Naive thymus-derived CD4-positive, alpha-beta T cell (primary cell): ENCODE measurements at regions of chr19 and their contacts with region 1.

Region 1: DNA sequence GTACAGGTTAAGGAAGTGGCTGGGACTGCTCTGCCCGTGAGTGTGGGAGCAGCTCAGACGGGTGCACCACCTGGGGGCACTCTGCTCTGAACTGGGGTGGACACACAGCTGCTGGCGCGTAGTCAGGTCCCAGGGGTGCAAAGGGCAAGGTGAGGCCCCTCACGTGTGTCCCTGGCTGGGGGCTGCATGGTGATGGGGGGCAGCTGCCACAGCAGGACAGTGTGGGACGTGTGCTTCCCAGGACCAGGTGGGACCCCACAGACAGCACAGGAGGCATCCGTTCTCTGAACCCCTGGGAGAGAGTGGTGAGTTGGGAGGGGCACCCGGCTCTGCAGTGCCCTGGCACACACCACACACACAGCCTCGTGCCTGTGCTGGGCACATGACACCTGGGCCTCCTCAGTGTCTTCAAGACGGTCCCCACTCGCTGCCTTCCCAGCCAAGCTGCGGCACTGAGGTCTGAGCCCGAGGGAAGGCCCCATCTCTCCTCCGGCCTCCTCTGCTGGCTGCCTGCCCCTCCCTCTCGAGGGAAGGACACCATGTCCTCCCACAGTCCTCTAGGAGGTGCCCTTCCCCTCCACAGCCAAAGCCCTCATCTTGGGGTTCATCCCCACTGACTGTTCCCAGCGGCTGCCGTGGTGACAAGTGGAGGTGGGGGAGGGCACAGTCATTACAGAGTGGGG is 24.7 kb downstream of the CILP2 start:
- DNase-seq: peak in 7 of 9 donors; percentile 28 to 61 (median 46)
- ATAC-seq: peak; percentile 81
- H3K4me3 ChIP-seq: no peak overlapping the region
- H3K4me3 Mint-ChIP-seq: peak overlapping the region in 1 of 10 donors; percentile 13
- H3K27ac ChIP-seq: no peak overlapping the region
- H3K27ac Mint-ChIP-seq: peak overlapping the region; percentile 36 to 78 (median 52)
- H3K4me1 ChIP-seq: peaks cover 0 to 18% of the 10 kb centered on the region in 2 donors
- H3K4me1 Mint-ChIP-seq: peaks cover 20 to 40% (median 29%) of the 10 kb centered on the region in 7 donors
- H3K27me3 ChIP-seq: no peaks in the 10 kb centered on the region
- H3K27me3 Mint-ChIP-seq: no peaks in the 10 kb centered on the region

Region 2: GRCh38 chr19:19475015-19475765 is 87.6 kb before region 1 on chr19:
- CTCF ChIA-PET with region 1: no interaction called
- POLR2A ChIA-PET with region 1: no interaction called
- intact Hi-C with region 1: no loop called
- DNase-seq: no peak
- ATAC-seq: no peak
- H3K4me3 ChIP-seq: no peak overlapping the region
- H3K4me3 Mint-ChIP-seq: peak overlapping the region in 4 of 10 donors; percentile 18 to 57 (median 30)
- H3K27ac ChIP-seq: peak overlapping the region; percentile 35
- H3K27ac Mint-ChIP-seq: peak overlapping the region; percentile 67 to 89 (median 80)
- H3K4me1 ChIP-seq: peaks cover 24 to 34% of the 10 kb centered on the region in 2 donors
- H3K4me1 Mint-ChIP-seq: peaks cover 55 to 95% (median 86%) of the 10 kb centered on the region in 7 donors
- H3K27me3 ChIP-seq: no peaks in the 10 kb centered on the region
- H3K27me3 Mint-ChIP-seq: no peaks in the 10 kb centered on the region

Region 3: DNA sequence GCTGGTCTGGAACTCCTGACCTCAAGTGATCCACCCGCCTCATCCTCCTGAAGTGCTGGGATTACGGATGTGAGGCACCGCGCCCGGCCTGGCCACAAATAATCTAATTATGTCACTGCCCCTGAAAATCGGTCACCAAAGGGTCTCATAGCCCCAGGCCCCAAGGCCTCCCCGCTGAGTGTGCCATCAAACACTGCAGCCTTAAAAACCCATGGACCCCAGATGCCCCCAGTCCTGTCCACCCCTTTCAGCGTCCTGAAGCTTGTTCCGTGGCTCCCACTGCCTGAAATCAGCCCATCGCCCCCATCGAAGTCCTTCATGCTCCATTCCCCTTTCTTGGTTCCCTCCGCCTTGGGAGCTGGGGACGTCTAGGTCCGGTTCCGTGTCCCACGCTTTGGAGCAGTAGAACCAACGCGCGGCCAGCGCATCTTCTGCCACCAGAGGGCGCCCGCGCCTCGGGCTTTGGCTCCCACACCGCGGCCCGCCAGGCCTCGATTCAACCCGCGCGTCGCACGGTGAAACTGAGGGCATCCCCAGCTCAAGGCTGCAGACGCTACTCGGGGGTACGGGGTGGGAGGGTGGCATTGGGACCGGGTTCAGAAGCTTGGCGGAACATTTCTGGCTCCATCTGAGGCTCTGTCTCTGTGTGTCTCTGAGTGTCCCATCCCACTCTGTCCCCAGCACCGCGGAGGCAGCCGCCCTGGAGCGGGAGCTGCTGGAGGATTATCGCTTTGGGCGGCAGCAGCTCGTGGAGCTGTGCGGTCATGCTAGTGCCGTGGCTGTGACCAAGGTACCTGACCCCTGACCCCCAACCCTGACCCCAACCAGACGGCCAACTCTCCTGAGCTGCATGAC is 30.6 kb before region 1 on chr19:
- CTCF ChIA-PET with region 1: interaction called, 9 read pairs
- POLR2A ChIA-PET with region 1: interaction called, 3 read pairs
- intact Hi-C with region 1: loop called in 1 of 2 experiments (anchors 1 kb)
- DNase-seq: peak; percentile 69 to 93 (median 84)
- ATAC-seq: peak; percentile 90
- H3K4me3 ChIP-seq: no peak overlapping the region
- H3K4me3 Mint-ChIP-seq: no peak overlapping the region
- H3K27ac ChIP-seq: no peak overlapping the region
- H3K27ac Mint-ChIP-seq: peak overlapping the region in 8 of 9 donors; percentile 33 to 84 (median 76)
- H3K4me1 ChIP-seq: peaks cover 3 to 9% of the 10 kb centered on the region in 2 donors
- H3K4me1 Mint-ChIP-seq: peaks cover 7 to 22% (median 17%) of the 10 kb centered on the region in 7 donors
- H3K27me3 ChIP-seq: no peaks in the 10 kb centered on the region
- H3K27me3 Mint-ChIP-seq: peaks cover 0 to 6% (median 0%) of the 10 kb centered on the region in 5 donors

Region 4: GRCh38 chr19:19591133-19591825 is 28.5 kb after region 1 on chr19:
- CTCF ChIA-PET with region 1: interaction called, 3 read pairs
- POLR2A ChIA-PET with region 1: interaction called, 14 read pairs
- intact Hi-C with region 1: loop called in 1 of 2 experiments (anchors 2 kb)
- DNase-seq: peak in 2 of 9 donors; percentile 66 to 67
- ATAC-seq: peak; percentile 89
- H3K4me3 ChIP-seq: no peak overlapping the region
- H3K4me3 Mint-ChIP-seq: peak overlapping the region in 5 of 10 donors; percentile 12 to 81 (median 21)
- H3K27ac ChIP-seq: peak overlapping the region; percentile 54
- H3K27ac Mint-ChIP-seq: peak overlapping the region; percentile 10 to 89 (median 71)
- H3K4me1 ChIP-seq: peaks cover 17 to 30% of the 10 kb centered on the region in 2 donors
- H3K4me1 Mint-ChIP-seq: peaks cover 25 to 74% (median 54%) of the 10 kb centered on the region in 7 donors
- H3K27me3 ChIP-seq: no peaks in the 10 kb centered on the region
- H3K27me3 Mint-ChIP-seq: no peaks in the 10 kb centered on the region

Region 5: GRCh38 chr19:19597809-19598306 is 35.1 kb after region 1 on chr19:
- CTCF ChIA-PET with region 1: interaction called, 3 read pairs
- POLR2A ChIA-PET with region 1: interaction called, 14 read pairs
- intact Hi-C with region 1: loop called in 1 of 2 experiments (anchors 2 kb)
- DNase-seq: peak in 8 of 9 donors; percentile 54 to 90 (median 84)
- ATAC-seq: peak; percentile 87
- H3K4me3 ChIP-seq: peak overlapping the region; percentile 52
- H3K4me3 Mint-ChIP-seq: peak overlapping the region; percentile 61 to 85 (median 74)
- H3K27ac ChIP-seq: peak overlapping the region; percentile 96
- H3K27ac Mint-ChIP-seq: peak overlapping the region; percentile 90 to 99 (median 97)
- H3K4me1 ChIP-seq: peaks cover 53 to 54% of the 10 kb centered on the region in 2 donors
- H3K4me1 Mint-ChIP-seq: peaks cover 29 to 75% (median 66%) of the 10 kb centered on the region in 7 donors
- H3K27me3 ChIP-seq: no peaks in the 10 kb centered on the region
- H3K27me3 Mint-ChIP-seq: no peaks in the 10 kb centered on the region

Region 6: GRCh38 chr19:19618219-19619051 is 55.6 kb after region 1 on chr19 and contains the start of gene PBX4:
- CTCF ChIA-PET with region 1: no interaction called
- POLR2A ChIA-PET with region 1: interaction called, 8 read pairs
- intact Hi-C with region 1: loop called in 1 of 2 experiments (anchors 1 kb)
- DNase-seq: peak; percentile 97 to 99 (median 99)
- ATAC-seq: peak; percentile 99
- H3K4me3 ChIP-seq: peak within 1 kb of the TSS; percentile 86
- H3K4me3 Mint-ChIP-seq: peak within 1 kb of the TSS; percentile 79 to 99 (median 90)
- H3K27ac ChIP-seq: peak within 1 kb of the TSS; percentile 82
- H3K27ac Mint-ChIP-seq: peak within 1 kb of the TSS; percentile 80 to 98 (median 94)
- H3K4me1 ChIP-seq: peaks cover 16 to 23% of the 10 kb centered on the region in 2 donors
- H3K4me1 Mint-ChIP-seq: peaks cover 34 to 50% (median 45%) of the 10 kb centered on the region in 7 donors
- H3K27me3 ChIP-seq: no peaks in the 10 kb centered on the region
- H3K27me3 Mint-ChIP-seq: no peaks in the 10 kb centered on the region
- total RNA-seq, gene PBX4: 22.6 to 42.7 (median 42.0) TPM

Region 7: GRCh38 chr19:19627621-19628500 is 65.1 kb after region 1 on chr19 and contains the start of gene LPAR2:
- CTCF ChIA-PET with region 1: interaction called, 4 read pairs
- POLR2A ChIA-PET with region 1: interaction called, 4 read pairs
- intact Hi-C with region 1: loop called in 1 of 2 experiments (anchors 1 kb)
- DNase-seq: peak; percentile 73 to 90 (median 82)
- ATAC-seq: peak; percentile 95
- H3K4me3 ChIP-seq: peak within 1 kb of the TSS; percentile 79
- H3K4me3 Mint-ChIP-seq: peak within 1 kb of the TSS; percentile 91 to 100 (median 96)
- H3K27ac ChIP-seq: peak within 1 kb of the TSS; percentile 92
- H3K27ac Mint-ChIP-seq: peak within 1 kb of the TSS; percentile 86 to 98 (median 95)
- H3K4me1 ChIP-seq: peaks cover 6 to 18% of the 10 kb centered on the region in 2 donors
- H3K4me1 Mint-ChIP-seq: peaks cover 17 to 32% (median 27%) of the 10 kb centered on the region in 7 donors
- H3K27me3 ChIP-seq: no peaks in the 10 kb centered on the region
- H3K27me3 Mint-ChIP-seq: no peaks in the 10 kb centered on the region
- total RNA-seq, gene LPAR2: 64.4 to 91.7 (median 75.0) TPM

Region 8: DNA sequence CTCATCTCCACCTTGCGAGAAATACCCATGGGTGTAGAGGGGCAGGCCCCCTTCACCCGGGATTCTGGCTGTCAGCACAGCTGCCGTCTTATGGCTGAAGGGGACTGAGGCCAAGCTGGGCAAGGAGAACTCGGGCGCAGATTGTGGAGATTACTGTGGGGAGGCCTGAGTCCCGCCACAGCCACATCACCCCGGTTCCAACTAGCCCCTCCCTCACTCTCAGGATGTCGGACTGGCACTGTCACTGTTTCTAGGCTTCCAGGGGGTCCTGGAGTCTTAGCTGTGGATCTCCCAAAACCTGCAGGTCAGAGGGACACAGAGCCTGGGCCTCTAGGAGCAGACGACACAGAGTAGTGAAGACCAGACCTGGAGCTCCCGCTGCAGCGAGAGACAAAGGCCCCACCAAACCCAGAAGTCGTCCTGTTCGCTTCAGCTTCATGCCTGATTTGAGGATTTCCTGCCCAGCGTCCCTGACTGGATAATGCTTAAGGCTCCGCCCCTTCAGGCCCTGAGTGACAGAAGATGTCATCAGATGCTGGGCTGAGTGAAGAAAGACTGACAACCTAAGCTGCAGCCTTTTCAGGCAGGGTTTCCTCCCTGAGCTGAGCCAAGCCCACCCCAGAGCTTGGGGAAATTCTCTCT is 393.7 kb after region 1 on chr19:
- CTCF ChIA-PET with region 1: no interaction called
- POLR2A ChIA-PET with region 1: no interaction called
- intact Hi-C with region 1: loop called in 1 of 2 experiments (anchors 1 kb)
- DNase-seq: no peak
- ATAC-seq: no peak
- H3K4me3 ChIP-seq: no peak overlapping the region
- H3K4me3 Mint-ChIP-seq: no peak overlapping the region
- H3K27ac ChIP-seq: no peak overlapping the region
- H3K27ac Mint-ChIP-seq: no peak overlapping the region
- H3K4me1 ChIP-seq: no peaks in the 10 kb centered on the region
- H3K4me1 Mint-ChIP-seq: peaks cover 0 to 8% (median 5%) of the 10 kb centered on the region in 7 donors
- H3K27me3 ChIP-seq: no peaks in the 10 kb centered on the region
- H3K27me3 Mint-ChIP-seq: no peaks in the 10 kb centered on the region